ENCODE measurements at regions of chr3 and their contacts with region 1.

Region 1: GRCh38 chr3:52065264-52065756 is 8.9 kb upstream of the DUSP7 start:
- DNase-seq: no peak
- H3K4me3 ChIP-seq: no peak overlapping the region
- H3K27ac ChIP-seq: peak overlapping the region in 1 of 2 experiments; percentile 100; a peak in 2 of 4 replicates
- H3K4me1 ChIP-seq: peaks cover 0 to 86% of the 10 kb centered on the region in 2 experiments; a peak in 3 of 4 replicates
- H3K27me3 ChIP-seq: no peaks in the 10 kb centered on the region
- CTCF ChIP-seq: no peak
- EP300 ChIP-seq: no peak
- RAD21 ChIP-seq: no peak

Region 2: DNA sequence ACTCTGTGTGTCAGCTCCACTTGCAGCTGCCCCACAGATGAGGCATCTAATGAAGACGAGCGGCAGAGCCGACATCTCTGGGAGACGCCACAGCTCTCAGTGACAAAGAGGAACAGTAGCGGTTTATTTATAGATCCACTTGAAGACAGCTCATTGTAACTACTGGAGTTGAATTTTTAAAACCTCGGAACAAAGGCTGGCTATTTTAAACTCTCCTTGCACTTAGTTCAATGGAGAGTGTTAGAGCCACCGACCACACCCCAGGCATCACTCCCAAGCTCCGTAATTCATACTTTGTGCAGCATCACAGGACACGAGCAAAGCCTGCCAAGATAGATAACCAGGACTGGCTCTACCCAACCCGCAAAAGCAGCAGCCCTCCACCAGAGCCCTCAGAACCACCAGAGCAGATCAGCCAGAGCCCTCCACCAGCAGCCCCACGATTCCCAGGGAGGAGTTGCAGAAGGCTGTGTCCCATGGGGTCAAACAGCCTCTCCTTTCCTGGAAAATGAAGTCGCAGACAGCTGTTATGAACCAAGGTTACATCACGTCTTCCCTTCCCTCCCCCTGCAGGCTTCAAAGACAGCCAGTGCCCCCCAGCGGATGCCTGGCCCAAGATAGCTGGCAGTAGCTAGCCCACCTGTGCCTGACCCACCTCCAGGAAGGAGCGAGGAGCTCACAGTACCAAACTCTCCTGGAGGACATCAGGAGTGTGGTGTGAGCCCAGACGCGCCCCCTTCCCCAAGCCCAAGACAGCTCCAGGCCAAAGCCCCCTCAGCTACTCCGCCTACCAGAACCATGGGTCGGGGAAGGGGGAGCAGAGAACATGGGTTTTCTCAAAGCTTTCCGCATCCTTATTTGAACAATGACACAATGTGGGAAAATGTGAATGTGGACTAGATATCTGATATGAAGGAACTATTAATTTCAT is 43.3 kb after region 1 on chr3:
- CTCF ChIA-PET with region 1: interaction called, 17 read pairs
- POLR2A ChIA-PET with region 1: interaction called, 4 read pairs
- DNase-seq: peak; percentile 75
- H3K4me3 ChIP-seq: no peak overlapping the region
- H3K27ac ChIP-seq: peak overlapping the region in 1 of 2 experiments; percentile 96; a peak in 2 of 4 replicates
- H3K4me1 ChIP-seq: peaks cover 0 to 37% of the 10 kb centered on the region in 2 experiments; a peak in 2 of 4 replicates
- H3K27me3 ChIP-seq: no peaks in the 10 kb centered on the region
- CTCF ChIP-seq: no peak
- EP300 ChIP-seq: peak in 1 of 2 experiments; percentile 50; a peak in 1 of 4 replicates
- RAD21 ChIP-seq: no peak; the same call in 1 of the 2 replicates

Measured in SK-N-SH (cell line).